ENCODE measurements at regions of chr11 and their contacts with region 1.

Region 1: DNA sequence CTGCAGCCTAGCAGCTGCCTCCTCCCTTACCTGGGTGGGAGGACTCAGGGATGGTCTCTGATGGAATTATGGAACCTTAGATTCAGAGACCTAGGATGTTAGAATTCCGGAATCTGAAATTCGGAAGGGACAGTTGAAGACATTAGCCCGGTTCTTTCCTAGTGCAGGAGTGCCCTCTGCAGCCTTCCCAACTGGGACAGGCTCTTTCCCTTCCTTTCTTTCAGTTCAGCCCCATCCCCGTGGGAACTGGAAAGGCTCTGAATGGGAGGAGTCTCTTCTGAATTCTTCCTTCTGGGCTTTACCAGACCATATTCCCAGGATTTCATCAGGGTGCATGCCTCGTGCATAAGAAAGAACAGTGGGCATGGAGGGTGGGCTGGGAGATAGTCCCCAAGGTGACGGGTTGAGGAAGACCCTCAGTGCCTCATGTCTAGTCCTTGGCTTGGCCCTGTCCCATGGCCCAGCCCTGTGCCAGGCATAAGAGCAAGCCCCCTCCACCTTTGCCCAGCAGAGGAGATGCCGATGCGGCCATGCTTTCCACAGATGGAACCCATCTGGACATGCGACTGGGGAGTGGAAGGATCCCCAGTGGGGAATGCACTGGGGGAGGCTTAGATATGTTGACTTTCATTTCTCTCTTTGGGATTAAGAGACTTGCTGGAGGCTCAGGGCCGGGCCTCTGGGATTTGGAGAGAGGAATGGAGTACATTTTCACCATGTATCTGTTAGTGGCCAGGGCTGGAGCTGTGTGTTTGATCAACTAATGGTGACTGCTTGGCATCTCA is 14.4 kb downstream of the DNAJB13 start:
- DNase-seq: no peak
- H3K4me3 Mint-ChIP-seq: peak overlapping the region; percentile 57
- H3K27ac Mint-ChIP-seq: no peak overlapping the region
- H3K4me1 Mint-ChIP-seq: peaks cover 28% of the 10 kb centered on the region
- H3K27me3 Mint-ChIP-seq: no peaks in the 10 kb centered on the region

Region 2: DNA sequence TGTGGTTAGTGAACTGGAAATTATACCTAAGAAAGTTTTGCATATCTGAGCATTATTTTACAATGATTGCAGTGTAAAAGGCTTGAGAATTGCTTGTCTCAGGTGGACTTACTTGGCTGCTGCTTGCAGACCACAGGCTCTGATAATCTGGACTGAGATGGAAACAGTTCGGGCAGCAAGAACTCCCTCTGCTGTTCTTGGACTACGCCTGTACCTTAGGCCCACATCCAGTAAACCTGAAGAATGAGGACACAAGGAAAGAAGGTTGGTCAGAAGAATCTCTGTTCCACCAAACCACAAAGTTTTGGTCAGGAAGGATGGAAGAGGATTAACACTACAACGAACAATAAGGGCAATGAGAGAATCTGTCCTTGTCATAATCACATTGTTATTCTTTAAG is 125.4 kb after region 1 on chr11:
- intact Hi-C with region 1: loop called (anchors 1 kb)
- DNase-seq: no peak
- H3K4me3 Mint-ChIP-seq: no peak overlapping the region
- H3K27ac Mint-ChIP-seq: no peak overlapping the region
- H3K4me1 Mint-ChIP-seq: no peaks in the 10 kb centered on the region
- H3K27me3 Mint-ChIP-seq: no peaks in the 10 kb centered on the region

Region 3: DNA sequence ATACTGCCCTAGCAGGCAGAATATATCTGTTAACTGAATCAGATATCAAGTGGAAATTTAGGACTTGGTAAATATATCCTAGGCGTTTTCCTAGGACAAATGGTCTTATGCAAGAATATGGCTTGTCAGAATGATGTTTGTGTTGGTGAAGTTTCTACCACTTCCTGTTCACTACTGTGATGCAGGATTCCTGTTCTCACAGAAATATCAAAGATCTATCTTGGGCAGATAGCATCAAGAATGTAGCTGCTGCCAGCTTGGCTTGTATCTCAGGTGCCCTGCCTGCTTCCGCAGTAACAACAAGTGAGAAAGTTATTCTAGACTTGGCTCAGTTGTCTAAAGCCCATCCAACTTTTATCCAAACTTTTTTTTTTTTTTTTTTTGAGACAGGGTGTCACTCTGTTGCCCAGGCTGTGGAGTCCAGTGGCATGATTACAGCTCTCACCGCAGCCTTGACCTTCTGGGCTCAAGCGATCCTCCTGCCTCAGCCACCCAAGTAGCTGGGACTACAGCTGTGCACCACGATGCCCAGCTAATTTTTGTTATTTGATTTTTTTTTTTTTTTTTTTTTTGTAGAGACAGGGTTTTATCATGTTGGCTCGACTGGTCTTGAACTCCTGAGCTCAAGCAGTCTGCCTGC is 267.2 kb after region 1 on chr11:
- intact Hi-C with region 1: loop called (anchors 10 kb)
- DNase-seq: no peak
- H3K4me3 Mint-ChIP-seq: no peak overlapping the region
- H3K27ac Mint-ChIP-seq: no peak overlapping the region
- H3K4me1 Mint-ChIP-seq: peaks cover 10% of the 10 kb centered on the region
- H3K27me3 Mint-ChIP-seq: no peaks in the 10 kb centered on the region

Region 4: GRCh38 chr11:74321487-74322188 is 356.4 kb after region 1 on chr11:
- intact Hi-C with region 1: loop called (anchors 1 kb)
- DNase-seq: no peak
- H3K4me3 Mint-ChIP-seq: no peak overlapping the region
- H3K27ac Mint-ChIP-seq: no peak overlapping the region
- H3K4me1 Mint-ChIP-seq: no peaks in the 10 kb centered on the region
- H3K27me3 Mint-ChIP-seq: peaks cover 16% of the 10 kb centered on the region